Mammary epithelial cell (primary cell): ENCODE measurements at regions of chr11 and their contacts with region 1.

Region 1: DNA sequence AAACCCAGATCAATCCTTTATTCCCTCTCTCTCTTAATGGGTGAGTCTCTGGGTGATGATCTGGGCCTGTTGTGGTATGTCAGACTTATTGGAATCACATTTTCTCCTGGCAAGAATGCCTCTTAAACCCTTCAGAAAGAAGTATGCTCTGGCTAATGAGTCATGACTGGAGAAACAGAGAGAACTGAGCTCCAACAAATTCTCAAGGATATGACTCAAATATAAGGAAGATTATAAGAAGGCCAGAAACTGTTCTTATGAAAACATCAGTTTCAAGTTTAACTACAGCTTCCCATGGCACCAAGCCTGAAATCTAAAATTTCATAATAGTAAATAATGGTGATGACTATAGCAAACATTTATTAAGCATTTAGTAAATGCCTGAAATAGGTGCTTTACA is 83.9 kb downstream of the OR5AK2 start:
- DNase-seq: peak; percentile 97
- H3K4me3 ChIP-seq: no peak overlapping the region
- H3K27ac ChIP-seq: peak overlapping the region; percentile 59
- H3K4me1 ChIP-seq: peaks cover 23% of the 10 kb centered on the region
- H3K27me3 ChIP-seq: no peaks in the 10 kb centered on the region
- CTCF ChIP-seq: no peak

Region 2: GRCh38 chr11:56932572-56933220 is 139.9 kb before region 1 on chr11:
- CTCF ChIA-PET with region 1: no interaction called
- dilution Hi-C with region 1: no loop called
- in situ Hi-C with region 1: no loop called
- intact Hi-C with region 1: loop called (anchors 10 kb)
- DNase-seq: peak; percentile 97
- H3K4me3 ChIP-seq: no peak overlapping the region
- H3K27ac ChIP-seq: peak overlapping the region; percentile 48
- H3K4me1 ChIP-seq: peaks cover 15% of the 10 kb centered on the region
- H3K27me3 ChIP-seq: no peaks in the 10 kb centered on the region
- CTCF ChIP-seq: no peak

Region 3: GRCh38 chr11:57055764-57056163 is 16.9 kb before region 1 on chr11:
- CTCF ChIA-PET with region 1: no interaction called
- dilution Hi-C with region 1: no loop called
- in situ Hi-C with region 1: no loop called
- intact Hi-C with region 1: no loop called
- DNase-seq: no peak
- H3K4me3 ChIP-seq: no peak overlapping the region
- H3K27ac ChIP-seq: no peak overlapping the region
- H3K4me1 ChIP-seq: no peaks in the 10 kb centered on the region
- H3K27me3 ChIP-seq: no peaks in the 10 kb centered on the region
- CTCF ChIP-seq: no peak